ENCODE measurements at regions of chr10 and their contacts with region 1.

Region 1: GRCh38 chr10:59625721-59626522 is 83.7 kb downstream of the SLC16A9 start:
- DNase-seq: peak in 1 of 2 donors; percentile 36
- ATAC-seq: peak; percentile 63 to 86 (median 80)
- H3K4me3 ChIP-seq: no peak overlapping the region
- H3K27ac ChIP-seq: peak overlapping the region in 2 of 10 donors; percentile 11 to 36
- H3K4me1 ChIP-seq: peaks cover 0 to 7% (median 0%) of the 10 kb centered on the region in 9 donors
- H3K27me3 ChIP-seq: peaks cover 0 to 11% (median 0%) of the 10 kb centered on the region in 7 donors
- CTCF ChIP-seq: peak; percentile 44 to 86 (median 81)

Region 2: GRCh38 chr10:58781873-58782488 is 843.9 kb before region 1 on chr10:
- intact Hi-C with region 1: loop called in 6 of 10 experiments (anchors 5 to 10 kb)
- DNase-seq: no peak
- ATAC-seq: peak in 6 of 8 donors; percentile 36 to 63 (median 46)
- H3K4me3 ChIP-seq: no peak overlapping the region
- H3K27ac ChIP-seq: peak overlapping the region in 6 of 10 donors; percentile 29 to 64 (median 42)
- H3K4me1 ChIP-seq: peaks cover 4 to 37% (median 18%) of the 10 kb centered on the region in 9 donors
- H3K27me3 ChIP-seq: peaks cover 0 to 9% (median 0%) of the 10 kb centered on the region in 7 donors
- CTCF ChIP-seq: peak in 8 of 9 donors; percentile 36 to 72 (median 62)

Region 3: DNA sequence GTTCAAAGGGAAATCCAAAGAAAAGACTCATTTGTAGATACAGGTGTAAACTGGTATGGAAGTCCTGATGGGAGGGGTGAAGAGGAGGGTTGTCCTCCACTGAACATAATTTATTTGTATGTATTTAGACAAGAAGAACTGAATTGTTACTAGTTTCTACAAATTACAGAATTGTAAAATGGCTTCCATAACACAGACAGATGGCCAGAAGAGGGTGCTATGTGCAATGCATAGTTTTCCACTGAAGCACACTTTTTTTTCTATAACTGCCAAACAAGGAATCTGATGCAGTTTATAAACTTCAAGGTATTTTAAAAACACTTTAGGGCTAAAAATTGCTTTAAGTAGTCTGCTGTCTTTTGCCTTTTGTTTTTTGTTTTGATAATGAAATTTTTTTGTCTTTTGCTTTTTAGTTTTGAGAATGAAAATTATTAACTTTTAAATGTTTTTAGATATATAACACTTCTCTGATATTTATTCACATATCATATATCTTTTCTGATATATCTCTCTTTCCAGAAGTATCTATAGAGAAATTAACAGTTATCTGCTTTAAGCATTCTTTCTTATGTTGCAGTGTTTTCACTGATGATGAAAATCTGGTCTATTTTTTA is 391.0 kb before region 1 on chr10:
- intact Hi-C with region 1: loop called in 8 of 10 experiments (anchors 2 to 10 kb)
- DNase-seq: peak in 1 of 2 donors; percentile 30
- ATAC-seq: no peak
- H3K4me3 ChIP-seq: no peak overlapping the region
- H3K27ac ChIP-seq: no peak overlapping the region
- H3K4me1 ChIP-seq: no peaks in the 10 kb centered on the region
- H3K27me3 ChIP-seq: no peaks in the 10 kb centered on the region
- CTCF ChIP-seq: peak; percentile 30 to 78 (median 62)

Region 4: DNA sequence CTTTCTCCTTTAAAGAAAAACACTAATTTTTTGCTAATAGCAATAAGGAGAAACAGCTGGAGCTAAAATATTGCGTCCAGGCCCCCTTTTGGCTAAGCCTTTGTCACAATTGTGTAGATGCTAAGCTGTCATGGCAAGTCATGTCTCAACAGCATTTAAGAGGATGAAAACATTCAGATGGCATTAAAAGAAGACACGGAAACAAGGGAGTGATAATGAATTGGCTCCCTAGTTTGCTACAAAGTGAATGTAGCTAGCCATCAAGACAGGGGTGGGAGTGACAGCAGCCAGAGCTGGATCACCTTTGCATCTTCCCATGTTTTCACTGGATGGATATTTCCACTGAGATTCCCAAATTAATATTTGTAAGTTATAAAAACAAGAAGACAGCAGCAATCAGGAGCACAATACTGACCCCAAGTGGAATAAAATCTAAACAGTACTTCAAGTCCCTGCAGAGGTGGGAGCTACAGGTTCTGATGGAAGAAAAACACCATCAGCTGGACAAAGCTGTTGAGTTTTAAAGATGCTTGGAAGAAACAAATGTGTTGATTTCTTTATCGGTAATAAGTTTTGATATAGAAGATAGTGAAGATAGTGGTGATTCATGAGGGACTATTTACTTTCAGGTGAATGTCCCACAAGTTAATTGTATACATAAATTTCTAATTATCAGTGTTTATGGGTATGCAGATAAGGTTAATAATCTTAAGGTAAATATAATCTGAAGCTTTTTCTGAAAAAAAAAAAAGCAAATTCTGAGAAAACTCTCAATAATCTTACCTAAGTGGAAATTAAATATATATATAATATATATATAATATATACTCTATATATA is 45.7 kb before region 1 on chr10:
- intact Hi-C with region 1: no loop called
- DNase-seq: no peak
- ATAC-seq: peak in 5 of 8 donors; percentile 54 to 59 (median 56)
- H3K4me3 ChIP-seq: no peak overlapping the region
- H3K27ac ChIP-seq: peak overlapping the region in 3 of 10 donors; percentile 11 to 35 (median 24)
- H3K4me1 ChIP-seq: peaks cover 0 to 29% (median 0%) of the 10 kb centered on the region in 9 donors
- H3K27me3 ChIP-seq: no peaks in the 10 kb centered on the region
- CTCF ChIP-seq: peak; percentile 4 to 79 (median 52)

Region 5: DNA sequence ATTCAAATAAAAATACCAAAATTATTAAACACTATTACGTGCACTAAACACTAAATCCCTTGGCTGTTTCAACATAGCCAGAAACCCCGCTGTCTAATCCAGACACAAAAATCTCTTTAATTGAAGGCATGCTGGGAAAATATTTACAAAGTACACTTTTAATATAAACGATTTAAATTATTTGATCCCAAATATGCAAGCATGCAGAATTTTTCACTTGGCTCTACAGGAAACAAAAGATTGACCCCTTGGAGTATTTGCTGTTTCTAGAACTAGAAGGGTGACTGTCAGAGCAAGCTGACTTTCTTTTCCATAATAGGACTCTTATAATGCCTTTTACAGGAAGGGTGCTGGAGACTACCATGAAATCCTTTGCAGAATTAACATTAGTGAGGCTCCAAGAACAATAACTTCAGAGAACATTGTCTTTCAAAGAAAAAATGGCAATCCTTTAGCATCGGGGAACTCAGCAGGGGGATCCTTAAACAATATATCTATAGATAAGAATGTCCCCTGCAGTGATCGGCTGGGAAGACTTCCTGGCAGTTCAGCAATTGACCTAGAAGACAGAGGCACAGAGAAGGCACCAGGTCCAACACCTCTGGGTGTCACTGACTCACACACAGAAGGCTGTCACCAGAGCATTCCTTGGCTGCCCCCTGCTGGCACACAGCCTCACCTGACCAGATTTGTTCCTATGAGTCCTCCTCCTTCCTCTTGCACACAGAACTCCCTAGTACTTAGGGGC is 183.1 kb after region 1 on chr10:
- intact Hi-C with region 1: loop called in 8 of 10 experiments (anchors 1 to 10 kb)
- DNase-seq: peak; percentile 67 to 74
- ATAC-seq: peak; percentile 71 to 83 (median 79)
- H3K4me3 ChIP-seq: no peak overlapping the region
- H3K27ac ChIP-seq: peak overlapping the region in 3 of 10 donors; percentile 6 to 70 (median 19)
- H3K4me1 ChIP-seq: peaks cover 0 to 21% (median 13%) of the 10 kb centered on the region in 9 donors
- H3K27me3 ChIP-seq: no peaks in the 10 kb centered on the region
- CTCF ChIP-seq: peak; percentile 47 to 74 (median 65)

Region 6: DNA sequence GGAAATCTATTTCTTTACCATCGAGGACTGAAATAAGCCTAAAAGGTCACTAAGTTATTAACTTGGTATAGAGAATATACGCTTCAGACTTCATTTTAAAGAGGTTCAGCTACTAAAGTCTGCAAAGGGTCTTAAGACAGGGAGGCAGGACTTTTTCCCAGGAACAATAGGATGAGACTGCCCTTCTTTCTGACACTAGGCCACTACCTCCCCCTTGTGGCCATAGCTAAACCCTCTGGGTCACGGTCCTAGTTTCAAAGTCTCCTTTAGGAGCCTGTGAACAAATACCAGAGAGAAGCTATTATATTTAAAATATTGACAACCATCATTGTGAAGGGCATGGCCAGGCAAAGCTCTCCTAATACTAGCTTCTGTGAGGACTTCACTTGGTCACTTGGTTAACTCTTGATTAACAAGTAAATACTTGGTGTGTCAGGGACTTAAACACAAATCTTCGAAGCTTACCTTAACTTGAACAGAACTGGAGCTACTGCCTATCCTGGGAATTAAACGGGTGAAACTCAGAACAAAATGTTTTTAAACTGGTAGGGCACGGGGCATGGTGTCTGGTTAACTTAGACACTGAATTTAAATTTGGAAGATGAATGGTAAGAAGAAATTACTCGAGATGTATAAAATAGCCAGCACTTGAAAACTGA is 204.8 kb after region 1 on chr10:
- intact Hi-C with region 1: loop called in 8 of 10 experiments (anchors 1 to 5 kb)
- DNase-seq: peak in 1 of 2 donors; percentile 44
- ATAC-seq: peak in 7 of 8 donors; percentile 48 to 74 (median 68)
- H3K4me3 ChIP-seq: no peak overlapping the region
- H3K27ac ChIP-seq: no peak overlapping the region
- H3K4me1 ChIP-seq: peaks cover 0 to 50% (median 9%) of the 10 kb centered on the region in 9 donors
- H3K27me3 ChIP-seq: no peaks in the 10 kb centered on the region
- CTCF ChIP-seq: peak; percentile 53 to 85 (median 81)

Region 7: DNA sequence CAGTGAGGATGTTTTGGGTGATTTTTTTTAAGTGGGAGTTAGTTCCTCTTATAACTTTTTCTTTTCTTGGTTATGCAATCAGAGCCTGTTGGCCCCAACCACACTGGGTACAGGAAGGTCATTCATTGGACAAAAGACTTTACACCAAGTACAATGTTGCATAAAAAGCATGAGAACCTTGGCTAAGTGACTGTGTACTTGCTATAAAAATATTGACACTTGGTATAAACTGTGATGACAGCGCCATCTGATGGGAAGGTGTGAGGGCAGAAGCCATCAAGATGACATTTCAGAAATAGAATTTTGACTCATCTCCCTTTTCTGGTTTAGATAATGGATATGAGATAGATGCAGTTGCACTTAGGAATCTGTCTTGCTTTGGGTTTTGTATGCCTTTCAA is 406.8 kb after region 1 on chr10:
- intact Hi-C with region 1: loop called in 9 of 10 experiments (anchors 2 to 10 kb)
- DNase-seq: peak in 1 of 2 donors; percentile 45
- ATAC-seq: peak; percentile 57 to 93 (median 82)
- H3K4me3 ChIP-seq: no peak overlapping the region
- H3K27ac ChIP-seq: peak overlapping the region in 1 of 10 donors; percentile 44
- H3K4me1 ChIP-seq: peaks cover 0 to 31% (median 6%) of the 10 kb centered on the region in 9 donors
- H3K27me3 ChIP-seq: no peaks in the 10 kb centered on the region
- CTCF ChIP-seq: peak in 6 of 9 donors; percentile 49 to 67 (median 61)

Region 8: GRCh38 chr10:60434418-60435046 is 808.6 kb after region 1 on chr10:
- intact Hi-C with region 1: loop called in 1 of 10 experiments (anchors 10 kb)
- DNase-seq: peak in 1 of 2 donors; percentile 40
- ATAC-seq: peak in 7 of 8 donors; percentile 62 to 81 (median 72)
- H3K4me3 ChIP-seq: no peak overlapping the region
- H3K27ac ChIP-seq: no peak overlapping the region
- H3K4me1 ChIP-seq: peaks cover 0 to 22% (median 8%) of the 10 kb centered on the region in 9 donors
- H3K27me3 ChIP-seq: no peaks in the 10 kb centered on the region
- CTCF ChIP-seq: peak; percentile 37 to 80 (median 74)